Stomach (tissue), 19 donors: ENCODE measurements at regions of chr10 and their contacts with region 1.

Region 1: DNA sequence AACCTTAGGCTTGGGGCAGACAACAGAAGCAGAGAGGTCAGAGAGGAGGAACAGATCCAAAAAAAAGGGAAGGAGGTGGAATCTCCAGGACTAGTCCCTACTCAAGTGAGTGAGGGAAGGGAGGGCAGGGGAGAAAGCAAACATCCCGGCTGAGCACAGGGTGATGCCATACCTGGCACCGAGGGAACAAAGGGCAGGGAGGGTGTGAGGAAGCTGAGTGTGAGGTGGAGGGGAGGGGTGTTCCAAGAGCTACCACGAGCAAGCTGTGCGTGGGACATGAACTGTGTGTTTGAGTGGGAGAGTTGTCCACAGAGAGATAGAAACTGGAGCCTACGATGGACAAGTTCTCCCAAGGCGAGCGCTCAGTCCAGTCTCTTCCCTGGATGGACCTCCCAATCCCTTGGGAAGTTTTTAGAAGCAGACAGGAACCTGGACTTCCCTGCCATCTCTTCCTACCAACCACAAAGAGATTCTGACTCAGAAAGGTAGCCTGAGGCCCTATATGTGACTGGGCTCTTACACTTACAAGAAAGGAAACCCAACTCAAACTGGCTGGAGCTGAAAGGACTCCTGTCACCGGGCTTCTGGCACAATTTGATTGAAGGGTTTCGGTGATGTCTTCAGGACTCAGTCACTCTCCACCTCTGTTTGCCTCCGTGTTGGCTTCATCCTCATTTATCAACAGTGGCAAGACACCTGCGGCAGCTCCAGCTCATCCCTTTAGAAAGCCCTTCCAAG is 3.9 kb upstream of the COL13A1 start:
- DNase-seq: no peak
- H3K4me3 ChIP-seq: no peak overlapping the region
- H3K27ac ChIP-seq: no peak overlapping the region
- H3K4me1 ChIP-seq: peaks cover 15 to 20% (median 19%) of the 10 kb centered on the region in 4 donors
- H3K27me3 ChIP-seq: peaks cover under 1 to 27% (median 17%) of the 10 kb centered on the region in 3 donors
- CTCF ChIP-seq: no peak
- EP300 ChIP-seq: no peak
- POLR2A ChIP-seq: no peak

Region 2: GRCh38 chr10:69855346-69856111 is 57.7 kb after region 1 on chr10:
- intact Hi-C with region 1: no loop called
- DNase-seq: no peak
- H3K4me3 ChIP-seq: no peak overlapping the region
- H3K27ac ChIP-seq: no peak overlapping the region
- H3K4me1 ChIP-seq: peaks cover 0 to 35% (median 5%) of the 10 kb centered on the region in 4 donors
- H3K27me3 ChIP-seq: peaks cover 0 to 5% (median 4%) of the 10 kb centered on the region in 3 donors
- CTCF ChIP-seq: no peak
- EP300 ChIP-seq: no peak
- POLR2A ChIP-seq: no peak

Region 3: GRCh38 chr10:69874449-69874848 is 76.6 kb after region 1 on chr10:
- intact Hi-C with region 1: no loop called
- DNase-seq: no peak
- H3K4me3 ChIP-seq: no peak overlapping the region
- H3K27ac ChIP-seq: no peak overlapping the region
- H3K4me1 ChIP-seq: peaks cover 0 to 2% (median under 1%) of the 10 kb centered on the region in 4 donors
- H3K27me3 ChIP-seq: no peaks in the 10 kb centered on the region
- CTCF ChIP-seq: no peak
- EP300 ChIP-seq: no peak
- POLR2A ChIP-seq: no peak

Region 4: GRCh38 chr10:69901628-69902505 is 104.1 kb after region 1 on chr10:
- intact Hi-C with region 1: loop called (anchors 10 kb)
- DNase-seq: peak; percentile 48 to 73
- H3K4me3 ChIP-seq: no peak overlapping the region
- H3K27ac ChIP-seq: no peak overlapping the region
- H3K4me1 ChIP-seq: peaks cover 5 to 32% (median 18%) of the 10 kb centered on the region in 4 donors
- H3K27me3 ChIP-seq: no peaks in the 10 kb centered on the region
- CTCF ChIP-seq: peak in 4 of 7 experiments; percentile 11 to 47 (median 34)
- EP300 ChIP-seq: no peak
- POLR2A ChIP-seq: no peak